GM13976 (cell line): ENCODE measurements at regions of chr4 and their contacts with region 1.

Region 1: DNA sequence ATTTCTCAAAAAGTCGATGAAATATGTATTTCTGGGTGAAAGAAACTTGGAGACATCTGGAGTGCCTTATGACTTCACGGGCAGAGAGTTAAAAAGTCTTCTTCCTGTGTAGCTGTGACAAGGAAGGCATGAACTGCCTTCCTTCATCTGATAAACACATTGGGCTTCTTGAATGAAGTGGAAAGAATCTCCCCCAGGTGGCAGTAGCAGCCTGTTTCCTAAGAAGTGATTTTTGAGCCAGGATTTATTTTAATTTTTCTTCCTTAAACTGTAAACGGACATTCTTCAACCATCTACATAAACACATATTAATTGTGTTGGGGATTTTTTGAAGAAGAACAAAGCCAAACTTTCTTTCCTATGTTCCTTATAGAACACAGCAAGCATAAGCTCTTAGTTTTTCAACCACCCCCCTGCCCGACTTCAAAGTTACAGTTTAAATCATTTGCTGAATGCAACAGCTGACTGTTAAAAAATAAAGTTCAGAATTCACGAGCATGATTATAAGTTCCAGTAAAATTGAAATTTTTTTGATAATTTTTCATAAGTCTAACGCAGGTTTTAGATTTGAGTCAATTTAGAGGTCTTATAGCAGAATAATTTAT is 980 bp upstream of the GIMD1 start:
- DNase-seq: peak; percentile 19
- CTCF ChIP-seq: peak; percentile 50

Region 2: DNA sequence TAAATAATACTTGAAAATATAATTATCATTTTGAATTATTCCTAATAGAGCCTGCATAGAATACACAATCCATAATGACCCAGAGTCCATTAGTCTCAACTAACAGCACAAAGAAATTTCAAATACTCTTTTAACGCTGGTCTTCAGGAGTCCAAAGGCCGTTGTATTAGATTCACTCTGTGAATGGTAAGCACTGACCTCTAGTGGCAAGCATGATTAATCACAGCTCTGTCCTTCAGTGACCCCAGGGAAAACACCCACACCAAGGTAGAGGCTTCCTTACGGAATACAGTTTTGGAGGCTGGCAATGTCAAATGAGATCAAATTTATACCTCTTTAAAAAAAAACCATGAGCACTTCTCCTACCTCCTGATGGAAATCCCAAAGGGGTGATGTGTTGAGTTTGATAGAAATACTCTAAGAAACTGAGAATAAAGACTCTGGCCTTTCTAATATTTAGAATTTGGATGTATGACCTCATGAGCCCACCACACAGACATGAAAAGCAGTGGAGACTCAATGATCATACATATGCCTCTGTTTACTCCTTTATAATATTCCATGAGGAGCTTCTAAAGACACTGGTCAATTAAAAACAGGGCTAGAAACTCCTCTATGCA is 813.7 kb after region 1 on chr4:
- in situ Hi-C with region 1: loop called (anchors 25 kb)
- DNase-seq: peak; percentile 11
- CTCF ChIP-seq: peak; percentile 77